ENCODE measurements at regions of chrX and their contacts with region 1.

Region 1: GRCh38 chrX:133402042-133402453 is 13.2 kb downstream of the GPC4 start:
- DNase-seq: no peak
- H3K4me3 Mint-ChIP-seq: no peak overlapping the region
- H3K27ac Mint-ChIP-seq: no peak overlapping the region
- H3K4me1 Mint-ChIP-seq: peaks cover 5% of the 10 kb centered on the region
- H3K27me3 Mint-ChIP-seq: peaks cover 3% of the 10 kb centered on the region

Region 2: DNA sequence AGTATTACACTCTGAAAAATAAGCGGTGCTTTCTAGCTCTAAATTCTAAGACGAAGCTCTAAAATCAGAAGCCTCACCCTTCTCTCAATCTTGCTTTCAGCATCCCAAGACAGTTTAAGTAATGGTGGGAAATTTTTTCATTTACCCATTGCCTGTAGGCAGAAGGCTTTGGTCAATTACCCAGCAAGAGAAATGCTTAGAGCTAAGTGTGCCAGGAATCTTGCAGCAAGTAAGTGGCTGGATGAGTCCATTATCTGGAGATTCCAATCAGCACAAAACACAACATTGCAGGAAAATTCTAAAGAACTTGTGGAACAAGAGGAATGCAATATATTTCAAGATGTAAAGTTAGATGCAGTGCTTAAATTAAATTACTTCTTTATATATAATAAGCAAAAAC is 333.6 kb before region 1 on chrX:
- CTCF ChIA-PET with region 1: no interaction called
- intact Hi-C with region 1: no loop called
- DNase-seq: no peak
- H3K4me3 Mint-ChIP-seq: no peak overlapping the region
- H3K27ac Mint-ChIP-seq: no peak overlapping the region
- H3K4me1 Mint-ChIP-seq: no peaks in the 10 kb centered on the region
- H3K27me3 Mint-ChIP-seq: peaks cover 9% of the 10 kb centered on the region

Region 3: DNA sequence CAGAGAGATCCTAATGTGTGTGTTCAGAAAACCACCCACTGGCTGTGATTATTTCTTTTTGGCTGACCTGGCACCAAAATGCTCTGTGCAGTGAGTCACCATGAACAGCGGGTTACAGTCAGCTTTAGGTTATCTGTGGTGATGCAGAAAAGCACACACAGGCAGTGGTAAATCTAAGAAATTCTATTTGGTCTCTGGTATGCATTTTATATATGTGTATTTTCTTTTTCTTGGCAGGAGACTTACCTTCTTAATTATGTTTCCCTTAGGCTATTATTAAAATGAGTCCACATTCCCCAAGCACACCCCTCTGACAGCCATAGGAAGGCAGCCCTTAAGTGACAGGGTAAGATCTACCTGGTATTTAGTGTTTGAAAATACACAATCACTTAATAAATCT is 104.8 kb before region 1 on chrX:
- CTCF ChIA-PET with region 1: no interaction called
- intact Hi-C with region 1: no loop called
- DNase-seq: no peak
- H3K4me3 Mint-ChIP-seq: no peak overlapping the region
- H3K27ac Mint-ChIP-seq: no peak overlapping the region
- H3K4me1 Mint-ChIP-seq: no peaks in the 10 kb centered on the region
- H3K27me3 Mint-ChIP-seq: no peaks in the 10 kb centered on the region

Region 4: GRCh38 chrX:133415276-133416105 is 13.4 kb after region 1 on chrX and contains the start of gene GPC4:
- CTCF ChIA-PET with region 1: no interaction called
- intact Hi-C with region 1: loop called (anchors 1 kb)
- DNase-seq: peak; percentile 5
- H3K4me3 Mint-ChIP-seq: peak within 1 kb of the TSS; percentile 65
- H3K27ac Mint-ChIP-seq: no peak within 1 kb of the TSS
- H3K4me1 Mint-ChIP-seq: peaks cover 3% of the 10 kb centered on the region
- H3K27me3 Mint-ChIP-seq: peaks cover 46% of the 10 kb centered on the region
- total RNA-seq, gene GPC4: 0.05 TPM